Adrenal gland (tissue), 19 donors: ENCODE measurements at regions of chr7 and their contacts with region 1.

Region 1: DNA sequence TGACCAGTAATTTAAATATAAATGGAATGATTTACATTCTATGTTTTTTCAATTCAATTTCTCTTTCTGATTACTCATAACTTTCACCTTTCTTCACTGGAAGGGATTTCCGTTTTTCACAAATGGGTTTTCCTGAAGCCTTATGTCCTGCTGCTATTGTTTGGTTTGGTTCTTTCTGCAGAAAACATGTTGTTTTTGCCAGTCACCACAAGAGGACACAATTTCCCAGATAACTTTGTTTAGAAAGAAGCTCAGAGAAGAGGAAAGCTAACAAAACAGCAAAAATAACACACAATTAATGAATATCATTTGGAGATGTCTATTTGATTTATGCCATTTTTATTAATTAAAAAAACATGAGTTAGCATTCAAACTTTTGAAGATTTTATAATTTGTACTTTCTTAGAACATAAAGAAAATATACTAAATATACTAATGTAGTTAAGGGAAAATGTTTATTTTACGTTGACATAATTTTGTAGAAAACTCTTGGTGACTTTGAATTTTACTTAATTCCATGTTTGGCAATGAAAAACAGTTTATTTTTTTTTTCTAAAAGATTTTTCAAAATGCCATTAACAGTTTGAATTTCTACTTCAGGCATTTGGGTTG is 4.6 kb upstream of the TWIST1 start:
- DNase-seq: no peak
- H3K4me3 ChIP-seq: no peak overlapping the region
- H3K27ac ChIP-seq: no peak overlapping the region
- H3K4me1 ChIP-seq: no peaks in the 10 kb centered on the region
- H3K27me3 ChIP-seq: peaks cover 39% of the 10 kb centered on the region
- CTCF ChIP-seq: peak; percentile 58 to 84 (median 70)
- POLR2A ChIP-seq: no peak

Region 2: GRCh38 chr7:19442016-19442785 is 320.1 kb after region 1 on chr7:
- intact Hi-C with region 1: loop called in 1 of 2 experiments (anchors 5 kb)
- DNase-seq: peak in 4 of 7 donors; percentile 19 to 26 (median 21)
- H3K4me3 ChIP-seq: no peak overlapping the region
- H3K27ac ChIP-seq: no peak overlapping the region
- H3K4me1 ChIP-seq: no peaks in the 10 kb centered on the region
- H3K27me3 ChIP-seq: no peaks in the 10 kb centered on the region
- CTCF ChIP-seq: peak in 5 of 6 experiments; percentile 12 to 52 (median 47)
- POLR2A ChIP-seq: no peak